ENCODE measurements at regions of chr4 and their contacts with region 1.

Region 1: GRCh38 chr4:53702334-53703266 is 111.3 kb upstream of the LNX1 start:
- DNase-seq: peak; percentile 87
- H3K4me3 ChIP-seq: peak overlapping the region; percentile 59
- H3K27ac ChIP-seq: peak overlapping the region; percentile 74
- H3K4me1 ChIP-seq: peaks cover 53% of the 10 kb centered on the region
- CTCF ChIP-seq: peak; percentile 64

Region 2: DNA sequence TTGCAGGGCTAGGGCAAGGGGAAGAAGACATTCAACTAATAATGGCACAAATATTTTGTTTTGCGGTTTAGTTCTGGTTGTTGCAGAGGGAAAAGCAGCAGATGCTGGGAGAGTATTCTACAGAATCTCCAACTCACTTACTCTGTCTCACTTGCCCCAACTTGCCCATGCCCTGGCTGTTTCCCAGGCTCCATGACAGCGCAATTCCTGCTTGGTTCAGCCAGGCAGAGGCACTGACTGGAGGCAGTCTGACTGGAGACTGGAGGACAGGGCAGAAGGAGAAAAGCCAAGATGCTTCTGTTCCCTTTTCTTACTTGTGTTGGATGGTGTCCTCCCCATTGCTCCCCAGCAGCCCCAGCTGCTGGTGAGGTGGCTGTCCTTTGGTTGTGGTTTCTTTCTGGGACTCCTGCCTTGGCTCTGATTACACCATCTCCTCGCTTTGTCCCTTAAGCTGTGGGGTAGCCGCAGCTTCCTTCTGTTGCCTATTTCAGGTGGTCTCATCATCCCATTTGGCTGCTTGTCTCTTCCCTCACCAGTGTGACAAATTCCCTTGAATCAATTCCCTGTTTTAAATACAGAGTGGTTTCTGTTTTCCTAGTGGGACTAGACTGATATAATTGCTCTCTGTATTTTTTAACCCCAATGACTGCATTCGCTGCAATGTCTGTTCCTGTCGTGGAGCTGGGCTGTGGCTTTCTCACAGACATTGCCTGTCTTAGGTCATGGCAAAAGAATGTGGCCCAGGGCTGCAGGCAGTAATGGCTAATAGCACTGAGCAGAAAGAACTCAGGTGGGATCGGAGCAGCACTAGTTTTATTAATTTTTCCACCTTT is 864.7 kb before region 1 on chr4:
- CTCF ChIA-PET with region 1: no interaction called
- POLR2A ChIA-PET with region 1: no interaction called
- intact Hi-C with region 1: no loop called
- DNase-seq: no peak
- H3K4me3 ChIP-seq: no peak overlapping the region
- H3K27ac ChIP-seq: no peak overlapping the region
- H3K4me1 ChIP-seq: no peaks in the 10 kb centered on the region
- CTCF ChIP-seq: no peak

Region 3: GRCh38 chr4:53205970-53206369 is 496.6 kb before region 1 on chr4:
- CTCF ChIA-PET with region 1: no interaction called
- POLR2A ChIA-PET with region 1: no interaction called
- intact Hi-C with region 1: no loop called
- DNase-seq: no peak
- H3K4me3 ChIP-seq: no peak overlapping the region
- H3K27ac ChIP-seq: no peak overlapping the region
- H3K4me1 ChIP-seq: no peaks in the 10 kb centered on the region
- CTCF ChIP-seq: no peak

Region 4: GRCh38 chr4:53365486-53366300 is 336.9 kb before region 1 on chr4 and contains the start of gene SCFD2:
- CTCF ChIA-PET with region 1: no interaction called
- POLR2A ChIA-PET with region 1: no interaction called
- intact Hi-C with region 1: loop called (anchors 10 kb)
- DNase-seq: peak; percentile 96
- H3K4me3 ChIP-seq: peak within 1 kb of the TSS; percentile 98
- H3K27ac ChIP-seq: peak within 1 kb of the TSS; percentile 50
- H3K4me1 ChIP-seq: peaks cover 60% of the 10 kb centered on the region
- CTCF ChIP-seq: no peak
- total RNA-seq, gene SCFD2: 52.0 and 52.9 TPM in 2 replicates

Region 5: DNA sequence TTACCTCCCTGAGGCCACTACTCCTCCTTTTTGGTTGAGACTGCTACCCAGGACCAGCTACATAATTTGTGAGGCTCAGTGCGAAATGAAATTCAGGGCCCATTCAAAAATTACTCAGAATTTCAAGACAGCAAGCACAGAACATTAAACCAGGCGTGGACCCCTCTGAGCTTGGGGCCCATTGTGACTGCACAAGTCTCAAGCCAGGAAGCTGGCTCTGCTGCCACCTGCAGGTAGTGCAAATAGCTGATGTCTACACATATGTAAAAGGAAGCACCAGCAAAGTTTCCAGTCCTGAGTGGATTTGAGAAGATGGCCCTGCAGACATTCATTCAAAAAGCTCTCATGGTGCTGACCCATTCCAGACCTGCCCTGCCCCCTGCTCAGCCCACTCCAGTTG is 102.1 kb after region 1 on chr4:
- CTCF ChIA-PET with region 1: interaction called, 9 read pairs
- POLR2A ChIA-PET with region 1: interaction called, 4 read pairs
- intact Hi-C with region 1: loop called (anchors 1 kb)
- DNase-seq: peak; percentile 78
- H3K4me3 ChIP-seq: no peak overlapping the region
- H3K27ac ChIP-seq: no peak overlapping the region
- H3K4me1 ChIP-seq: no peaks in the 10 kb centered on the region
- CTCF ChIP-seq: peak; percentile 89

Region 6: DNA sequence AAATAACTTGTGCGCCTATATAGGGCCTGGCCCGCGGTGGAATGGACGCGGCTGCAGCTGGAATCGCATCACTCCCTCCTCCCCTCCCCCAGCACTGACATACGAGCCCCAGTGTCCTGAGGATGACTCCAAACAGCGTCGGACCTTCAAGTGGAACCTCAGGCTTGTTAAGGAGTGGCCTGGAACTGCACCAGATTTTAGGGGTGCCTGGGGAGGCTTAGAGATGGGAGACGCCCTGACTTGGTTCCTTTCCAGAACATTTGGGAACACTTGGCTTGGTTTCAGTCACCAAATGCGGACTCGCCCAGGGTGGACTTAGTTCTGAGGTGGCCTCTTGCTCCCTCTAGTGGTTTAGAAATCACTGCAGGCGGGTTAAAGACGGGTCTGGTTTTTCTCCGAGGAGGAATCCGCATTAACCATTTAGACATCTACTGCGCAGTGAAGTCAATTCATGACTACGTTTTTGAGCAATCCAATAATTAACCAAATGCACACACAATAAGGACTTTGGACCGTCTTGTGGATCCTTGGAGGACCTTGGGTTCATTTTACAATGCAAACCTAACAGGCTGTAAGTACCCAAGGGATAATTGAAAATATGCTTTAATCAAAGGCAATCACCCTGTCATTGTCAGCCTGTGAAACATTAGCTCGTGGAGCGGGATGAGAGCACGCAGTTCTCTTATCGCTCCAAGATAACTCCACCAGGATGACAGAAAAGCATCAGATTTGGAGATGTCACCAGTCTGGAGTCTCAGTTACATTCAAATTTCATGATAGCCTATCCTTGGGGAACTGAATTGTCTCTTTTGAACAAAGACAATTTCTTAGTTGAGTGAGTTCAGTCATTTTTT is 515.3 kb after region 1 on chr4:
- CTCF ChIA-PET with region 1: no interaction called
- POLR2A ChIA-PET with region 1: no interaction called
- intact Hi-C with region 1: loop called (anchors 5 kb)
- DNase-seq: peak; percentile 75
- H3K4me3 ChIP-seq: peak overlapping the region; percentile 41
- H3K27ac ChIP-seq: no peak overlapping the region
- H3K4me1 ChIP-seq: peaks cover 3% of the 10 kb centered on the region
- CTCF ChIP-seq: peak; percentile 97

Region 7: DNA sequence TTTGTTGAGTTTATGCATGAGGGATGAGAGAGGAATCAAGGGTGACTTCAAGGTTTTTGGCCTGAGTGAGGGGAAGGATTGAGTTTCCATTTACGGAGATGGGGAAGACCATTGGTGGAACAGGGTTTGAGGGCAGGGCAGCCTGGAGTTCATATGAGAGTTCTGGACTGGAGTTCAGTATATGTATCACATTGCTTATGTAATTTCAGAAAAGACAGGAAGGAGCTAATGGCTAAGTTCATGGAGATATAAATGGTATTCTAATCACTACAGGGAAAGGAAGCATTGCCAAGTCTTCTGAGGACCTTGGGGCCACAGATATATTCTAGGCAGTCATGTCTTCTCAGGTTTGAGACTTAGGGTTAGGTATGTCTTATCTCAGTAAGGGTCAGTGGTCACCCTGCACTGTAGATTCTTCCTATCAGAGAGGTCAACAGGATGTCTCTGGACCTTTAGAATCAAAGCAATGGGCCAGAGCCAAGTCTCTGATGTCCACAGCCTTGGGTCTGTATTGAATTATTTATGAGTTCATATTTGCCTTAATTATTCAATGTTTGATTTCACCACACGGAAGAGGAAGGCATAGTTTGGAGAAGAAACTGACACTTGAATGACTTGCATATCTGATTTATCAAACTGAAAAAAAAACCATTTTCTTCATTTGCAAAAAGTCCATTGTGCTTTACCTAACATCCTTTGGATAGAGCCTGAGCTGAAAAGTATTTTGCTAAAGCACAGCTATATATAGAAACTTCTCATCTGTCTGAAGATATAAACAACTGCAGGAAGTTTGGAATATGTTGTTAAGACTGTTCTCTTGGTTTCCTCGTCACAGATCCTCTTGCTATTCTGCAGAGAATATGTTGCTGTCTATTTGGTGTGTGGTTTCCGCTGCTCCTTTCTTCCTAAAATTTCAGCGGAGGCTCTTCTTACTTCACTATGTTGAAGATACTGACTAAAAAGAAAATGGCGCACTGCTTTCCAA is 666.0 kb after region 1 on chr4:
- CTCF ChIA-PET with region 1: no interaction called
- POLR2A ChIA-PET with region 1: no interaction called
- intact Hi-C with region 1: no loop called
- DNase-seq: no peak
- H3K4me3 ChIP-seq: no peak overlapping the region
- H3K27ac ChIP-seq: no peak overlapping the region
- H3K4me1 ChIP-seq: no peaks in the 10 kb centered on the region
- CTCF ChIP-seq: no peak